ENCODE measurements at regions of chr19 and their contacts with region 1.

Region 1: DNA sequence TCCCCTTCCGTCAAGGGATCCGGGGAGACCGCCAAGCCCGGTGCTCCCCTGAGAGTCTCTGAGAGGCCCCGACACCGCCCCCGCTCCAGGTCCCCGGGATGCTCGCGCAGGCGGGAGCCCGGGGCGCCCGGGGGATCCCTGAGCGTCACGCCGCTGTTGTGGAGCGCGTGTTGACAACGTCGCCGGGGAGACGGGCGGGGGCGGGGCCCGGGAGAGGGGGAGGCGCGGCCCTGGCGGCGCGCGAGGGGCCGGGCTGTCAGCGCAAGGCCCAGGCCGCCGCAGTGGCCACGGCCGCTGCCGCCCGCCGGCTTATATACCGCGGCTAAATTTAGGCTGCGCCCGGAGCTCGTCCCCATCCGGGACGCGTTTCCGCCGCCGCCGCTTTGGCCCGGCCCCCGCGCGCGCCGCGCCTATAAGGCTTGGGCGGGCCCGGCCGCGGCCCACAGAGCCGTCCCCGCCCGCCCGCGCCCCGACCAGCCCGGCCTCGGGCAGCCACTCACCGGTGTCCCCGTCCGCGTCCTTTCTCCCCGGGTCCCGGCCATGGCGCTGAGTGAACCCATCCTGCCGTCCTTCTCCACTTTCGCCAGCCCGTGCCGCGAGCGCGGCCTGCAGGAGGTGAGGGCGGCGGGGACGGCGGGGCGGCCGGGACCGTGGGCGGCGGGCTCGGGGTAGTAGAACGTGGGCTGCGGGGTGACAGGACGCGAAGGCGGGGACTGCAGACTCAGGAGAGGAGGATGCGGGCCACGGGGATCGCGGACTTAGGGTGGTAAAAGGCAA is at the start of gene KLF2:
- DNase-seq: peak; percentile 88 to 96 (median 95)
- ATAC-seq: peak; percentile 81
- H3K4me3 ChIP-seq: peak within 1 kb of the TSS; percentile 86
- H3K4me3 Mint-ChIP-seq: peak within 1 kb of the TSS; percentile 51 to 98 (median 85)
- H3K27ac ChIP-seq: peak within 1 kb of the TSS; percentile 98
- H3K27ac Mint-ChIP-seq: peak within 1 kb of the TSS; percentile 85 to 100 (median 96)
- H3K4me1 ChIP-seq: peaks cover 23 to 30% of the 10 kb centered on the region in 2 donors
- H3K4me1 Mint-ChIP-seq: peaks cover 27 to 54% (median 48%) of the 10 kb centered on the region in 7 donors
- H3K27me3 ChIP-seq: no peaks in the 10 kb centered on the region
- H3K27me3 Mint-ChIP-seq: peaks cover 0 to 70% (median 0%) of the 10 kb centered on the region in 5 donors
- total RNA-seq, gene KLF2: 195 to 630 (median 466) TPM

Region 2: GRCh38 chr19:14529254-14530004 is 1795.1 kb before region 1 on chr19 and contains the start of gene TECR:
- CTCF ChIA-PET with region 1: no interaction called
- POLR2A ChIA-PET with region 1: no interaction called
- intact Hi-C with region 1: loop called in 1 of 2 experiments (anchors 10 kb)
- DNase-seq: peak; percentile 98 to 100 (median 100)
- ATAC-seq: peak; percentile 96
- H3K4me3 ChIP-seq: peak within 1 kb of the TSS; percentile 96
- H3K4me3 Mint-ChIP-seq: peak within 1 kb of the TSS; percentile 88 to 97 (median 95)
- H3K27ac ChIP-seq: peak within 1 kb of the TSS; percentile 89
- H3K27ac Mint-ChIP-seq: peak within 1 kb of the TSS; percentile 95 to 100 (median 98)
- H3K4me1 ChIP-seq: peaks cover 22 to 30% of the 10 kb centered on the region in 2 donors
- H3K4me1 Mint-ChIP-seq: peaks cover 9 to 72% (median 54%) of the 10 kb centered on the region in 7 donors
- H3K27me3 ChIP-seq: no peaks in the 10 kb centered on the region
- H3K27me3 Mint-ChIP-seq: no peaks in the 10 kb centered on the region
- total RNA-seq, gene TECR: 123 to 218 (median 150) TPM

Region 3: DNA sequence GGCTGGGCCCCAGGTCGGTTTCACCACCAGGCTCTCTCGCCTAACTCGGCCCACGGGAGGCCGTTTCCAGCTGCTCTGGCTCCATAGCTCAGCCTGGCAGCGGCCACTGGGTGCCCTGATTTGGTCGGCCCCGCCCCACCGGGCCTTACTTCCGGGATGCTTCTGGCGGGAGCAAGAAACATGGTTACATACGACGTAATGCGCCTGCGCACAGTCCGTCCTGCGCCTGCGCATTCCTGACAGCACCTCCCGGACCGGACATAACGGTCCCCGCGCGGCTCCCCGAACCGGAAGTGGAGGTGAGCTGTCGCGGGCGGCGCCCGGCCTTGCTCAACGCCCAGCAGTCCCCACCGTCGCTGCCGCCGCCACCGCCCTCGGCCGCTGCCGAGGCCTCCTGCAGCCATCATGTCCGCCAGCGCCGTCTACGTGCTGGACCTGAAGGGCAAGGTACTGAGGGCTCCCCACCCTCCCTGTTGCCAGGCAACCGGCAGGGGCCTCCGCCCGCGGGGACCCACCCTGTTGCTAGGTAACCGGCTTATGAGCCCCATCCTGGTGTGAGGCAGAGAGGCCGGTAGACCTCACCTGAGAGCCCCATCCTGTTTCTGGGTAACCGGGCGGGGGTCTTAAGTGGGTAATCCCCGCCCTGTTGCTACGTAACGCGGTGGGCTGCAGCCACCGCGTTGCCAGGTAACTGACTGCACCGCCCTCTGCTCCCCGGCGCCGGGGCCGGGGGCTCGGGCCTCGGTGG is 126.8 kb before region 1 on chr19 and contains the start of gene AP1M1:
- CTCF ChIA-PET with region 1: no interaction called
- POLR2A ChIA-PET with region 1: interaction called, 10 read pairs
- intact Hi-C with region 1: loop called (anchors 1 to 2 kb)
- DNase-seq: peak; percentile 96 to 99 (median 97)
- ATAC-seq: peak; percentile 94
- H3K4me3 ChIP-seq: peak within 1 kb of the TSS; percentile 99
- H3K4me3 Mint-ChIP-seq: peak within 1 kb of the TSS; percentile 81 to 95 (median 90)
- H3K27ac ChIP-seq: peak within 1 kb of the TSS; percentile 95
- H3K27ac Mint-ChIP-seq: peak within 1 kb of the TSS; percentile 90 to 99 (median 97)
- H3K4me1 ChIP-seq: peaks cover 16 to 23% of the 10 kb centered on the region in 2 donors
- H3K4me1 Mint-ChIP-seq: peaks cover 38 to 49% (median 46%) of the 10 kb centered on the region in 7 donors
- H3K27me3 ChIP-seq: no peaks in the 10 kb centered on the region
- H3K27me3 Mint-ChIP-seq: no peaks in the 10 kb centered on the region
- total RNA-seq, gene AP1M1: 94.9 to 149 (median 125) TPM

Region 4: GRCh38 chr19:16259385-16260159 is 65.0 kb before region 1 on chr19:
- CTCF ChIA-PET with region 1: no interaction called
- POLR2A ChIA-PET with region 1: interaction called, 11 read pairs
- intact Hi-C with region 1: loop called in 1 of 2 experiments (anchors 5 kb)
- DNase-seq: no peak
- ATAC-seq: peak; percentile 40
- H3K4me3 ChIP-seq: no peak overlapping the region
- H3K4me3 Mint-ChIP-seq: peak overlapping the region in 1 of 10 donors; percentile 16
- H3K27ac ChIP-seq: no peak overlapping the region
- H3K27ac Mint-ChIP-seq: peak overlapping the region in 3 of 9 donors; percentile 38 to 83 (median 43)
- H3K4me1 ChIP-seq: peaks cover 38 to 43% of the 10 kb centered on the region in 2 donors
- H3K4me1 Mint-ChIP-seq: peaks cover 28 to 51% (median 40%) of the 10 kb centered on the region in 7 donors
- H3K27me3 ChIP-seq: no peaks in the 10 kb centered on the region
- H3K27me3 Mint-ChIP-seq: peaks cover 0 to 6% (median 0%) of the 10 kb centered on the region in 5 donors

Region 5: DNA sequence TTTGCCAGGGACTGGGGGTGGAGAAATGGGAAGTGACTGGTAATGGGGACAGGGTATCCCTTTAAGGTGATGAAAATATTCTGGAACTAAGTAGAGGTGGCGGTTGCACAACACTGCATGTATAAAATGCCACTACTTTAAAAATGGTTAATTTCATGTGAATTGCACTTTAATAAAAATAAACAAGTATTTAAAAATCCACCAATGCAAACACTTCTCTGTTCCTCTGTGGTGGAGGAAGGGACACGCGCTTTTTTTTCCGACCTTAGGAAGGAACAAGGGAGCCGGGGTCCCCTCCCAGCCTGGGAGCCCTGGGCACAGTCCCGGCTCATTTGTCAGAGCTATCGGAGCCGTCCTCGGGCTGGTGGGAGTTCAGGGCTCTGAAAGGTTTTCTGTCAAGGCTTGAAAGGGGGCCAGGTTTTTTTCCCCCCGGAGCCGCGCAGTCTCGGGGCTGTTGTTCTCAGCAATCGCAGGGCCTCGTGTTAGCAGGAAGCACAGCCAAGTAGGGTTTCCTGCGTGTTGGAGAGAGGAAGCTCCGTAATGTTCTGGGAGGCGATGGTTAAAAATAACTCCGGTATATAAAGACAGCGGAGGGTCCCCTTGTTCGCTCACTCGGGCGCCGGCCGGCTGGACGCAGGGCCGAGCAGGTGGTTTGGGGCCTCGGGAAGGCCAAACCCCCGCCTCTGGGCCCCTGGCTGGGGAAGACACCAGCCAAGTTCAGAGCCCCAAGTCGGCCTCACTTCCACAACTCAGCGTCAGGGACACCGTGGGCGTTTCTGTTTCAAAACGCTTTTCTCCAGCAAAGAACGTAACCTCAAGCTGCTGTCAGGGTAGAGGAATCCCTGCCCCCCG is 41.1 kb before region 1 on chr19:
- CTCF ChIA-PET with region 1: no interaction called
- POLR2A ChIA-PET with region 1: interaction called, 19 read pairs
- intact Hi-C with region 1: loop called in 1 of 2 experiments (anchors 2 kb)
- DNase-seq: peak in 8 of 9 donors; percentile 31 to 77 (median 68)
- ATAC-seq: peak; percentile 75
- H3K4me3 ChIP-seq: peak overlapping the region; percentile 53
- H3K4me3 Mint-ChIP-seq: peak overlapping the region; percentile 61 to 86 (median 84)
- H3K27ac ChIP-seq: peak overlapping the region; percentile 75
- H3K27ac Mint-ChIP-seq: peak overlapping the region; percentile 81 to 98 (median 94)
- H3K4me1 ChIP-seq: peaks cover 9 to 34% of the 10 kb centered on the region in 2 donors
- H3K4me1 Mint-ChIP-seq: peaks cover 31 to 60% (median 51%) of the 10 kb centered on the region in 7 donors
- H3K27me3 ChIP-seq: no peaks in the 10 kb centered on the region
- H3K27me3 Mint-ChIP-seq: peaks cover 0 to 48% (median 0%) of the 10 kb centered on the region in 5 donors

Region 6: DNA sequence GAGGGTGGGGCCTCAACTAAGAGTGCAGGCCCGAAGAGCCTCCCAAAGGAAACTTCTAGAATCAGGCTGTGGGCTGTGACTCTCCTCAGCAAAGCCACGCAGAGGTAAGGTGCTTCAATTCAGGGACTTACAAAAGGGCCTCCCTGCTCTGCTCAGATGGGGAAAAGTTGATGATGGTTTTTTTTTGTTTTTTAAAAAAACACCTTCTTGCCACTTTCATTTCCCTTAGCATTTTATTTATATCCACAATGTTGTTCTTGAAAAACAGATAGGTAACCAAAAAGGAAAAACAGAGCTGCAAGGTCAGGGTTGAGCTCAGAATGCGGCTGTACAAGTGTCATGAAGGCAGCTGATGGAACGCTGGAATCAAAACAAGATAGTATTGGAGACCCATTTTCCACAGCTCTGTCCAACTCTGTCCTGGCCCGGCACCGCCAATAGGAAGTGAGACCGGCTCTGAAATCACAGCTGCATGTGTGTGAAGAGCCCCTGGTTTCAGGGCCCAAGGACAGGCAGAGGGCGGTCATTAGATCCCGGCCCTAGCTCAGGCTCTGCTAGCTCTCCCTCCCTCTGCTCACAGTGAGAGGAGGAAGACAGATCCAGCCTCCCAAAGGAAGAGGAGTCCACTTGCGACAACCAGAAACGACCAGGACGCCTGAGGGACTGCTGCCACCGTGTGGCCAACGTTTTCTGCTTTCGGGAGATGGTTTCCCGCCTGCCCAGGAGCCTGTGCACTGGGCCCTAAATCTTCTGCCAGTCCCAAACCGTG is 58.4 kb after region 1 on chr19:
- CTCF ChIA-PET with region 1: interaction called, 70 read pairs
- POLR2A ChIA-PET with region 1: interaction called, 4,370 read pairs
- intact Hi-C with region 1: loop called in 1 of 2 experiments (anchors 1 kb)
- DNase-seq: peak; percentile 63 to 81 (median 75)
- ATAC-seq: peak; percentile 82
- H3K4me3 ChIP-seq: peak overlapping the region; percentile 44
- H3K4me3 Mint-ChIP-seq: peak overlapping the region; percentile 61 to 84 (median 70)
- H3K27ac ChIP-seq: peak overlapping the region; percentile 84
- H3K27ac Mint-ChIP-seq: peak overlapping the region in 7 of 9 donors; percentile 87 to 98 (median 97)
- H3K4me1 ChIP-seq: peaks cover 37 to 53% of the 10 kb centered on the region in 2 donors
- H3K4me1 Mint-ChIP-seq: peaks cover 36 to 81% (median 63%) of the 10 kb centered on the region in 7 donors
- H3K27me3 ChIP-seq: no peaks in the 10 kb centered on the region
- H3K27me3 Mint-ChIP-seq: no peaks in the 10 kb centered on the region

Region 7: DNA sequence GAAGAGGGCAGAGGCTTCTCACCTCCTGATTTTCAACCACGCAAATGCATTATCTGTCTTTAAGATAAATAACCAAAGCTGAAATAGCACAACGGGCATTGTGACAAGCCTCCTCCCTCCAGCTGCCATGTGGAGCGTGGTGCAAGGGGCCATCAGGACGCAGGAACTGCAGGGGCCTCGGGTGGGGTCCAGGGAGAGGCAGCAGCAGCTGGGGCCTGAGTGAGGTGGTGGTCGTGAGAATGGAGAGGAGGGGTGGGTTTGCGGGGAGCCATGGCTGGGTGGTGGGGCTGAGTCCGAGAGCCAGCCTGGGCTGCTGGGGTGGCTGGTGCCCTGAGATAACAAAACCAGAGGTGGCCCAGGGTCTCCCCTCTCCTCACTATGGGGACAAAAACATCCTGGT is 81.2 kb after region 1 on chr19:
- CTCF ChIA-PET with region 1: no interaction called
- POLR2A ChIA-PET with region 1: no interaction called
- intact Hi-C with region 1: no loop called
- DNase-seq: no peak
- ATAC-seq: no peak
- H3K4me3 ChIP-seq: no peak overlapping the region
- H3K4me3 Mint-ChIP-seq: no peak overlapping the region
- H3K27ac ChIP-seq: no peak overlapping the region
- H3K27ac Mint-ChIP-seq: peak overlapping the region in 2 of 9 donors; percentile 33 to 84
- H3K4me1 ChIP-seq: no peaks in the 10 kb centered on the region
- H3K4me1 Mint-ChIP-seq: peaks cover 0 to 17% (median 4%) of the 10 kb centered on the region in 7 donors
- H3K27me3 ChIP-seq: no peaks in the 10 kb centered on the region
- H3K27me3 Mint-ChIP-seq: no peaks in the 10 kb centered on the region

Region 8: GRCh38 chr19:16446724-16447368 is 122.3 kb after region 1 on chr19:
- CTCF ChIA-PET with region 1: no interaction called
- POLR2A ChIA-PET with region 1: no interaction called
- intact Hi-C with region 1: no loop called
- DNase-seq: peak in 1 of 9 donors; percentile 26
- ATAC-seq: peak; percentile 75
- H3K4me3 ChIP-seq: no peak overlapping the region
- H3K4me3 Mint-ChIP-seq: peak overlapping the region in 5 of 10 donors; percentile 21 to 46 (median 44)
- H3K27ac ChIP-seq: no peak overlapping the region
- H3K27ac Mint-ChIP-seq: peak overlapping the region; percentile 18 to 90 (median 71)
- H3K4me1 ChIP-seq: peaks cover 8 to 30% of the 10 kb centered on the region in 2 donors
- H3K4me1 Mint-ChIP-seq: peaks cover 40 to 78% (median 60%) of the 10 kb centered on the region in 7 donors
- H3K27me3 ChIP-seq: no peaks in the 10 kb centered on the region
- H3K27me3 Mint-ChIP-seq: no peaks in the 10 kb centered on the region